Uterus (tissue), 4 donors: ENCODE measurements at regions of chr17 and their contacts with region 1.

Region 1: GRCh38 chr17:40443583-40444327 is 505 bp downstream of the IGFBP4 start:
- DNase-seq: peak; percentile 83
- H3K4me3 ChIP-seq: peak overlapping the region; percentile 56 to 87
- H3K27ac ChIP-seq: peak overlapping the region; percentile 94 to 97
- H3K4me1 ChIP-seq: peaks cover 3 to 15% of the 10 kb centered on the region in 2 donors
- H3K27me3 ChIP-seq: no peaks in the 10 kb centered on the region
- CTCF ChIP-seq: peak in 3 of 4 experiments; percentile 24 to 42 (median 29)
- POLR2A ChIP-seq: no peak

Region 2: GRCh38 chr17:40479533-40480480 is 36.1 kb after region 1 on chr17:
- intact Hi-C with region 1: loop called (anchors 5 kb)
- DNase-seq: no peak
- H3K4me3 ChIP-seq: no peak overlapping the region
- H3K27ac ChIP-seq: no peak overlapping the region
- H3K4me1 ChIP-seq: no peaks in the 10 kb centered on the region
- H3K27me3 ChIP-seq: no peaks in the 10 kb centered on the region
- CTCF ChIP-seq: no peak
- POLR2A ChIP-seq: no peak

Region 3: GRCh38 chr17:40510328-40510648 is 66.5 kb after region 1 on chr17:
- intact Hi-C with region 1: no loop called
- DNase-seq: peak; percentile 61 to 77
- H3K4me3 ChIP-seq: no peak overlapping the region
- H3K27ac ChIP-seq: peak overlapping the region; percentile 14 to 22
- H3K4me1 ChIP-seq: no peaks in the 10 kb centered on the region
- H3K27me3 ChIP-seq: no peaks in the 10 kb centered on the region
- CTCF ChIP-seq: no peak
- POLR2A ChIP-seq: no peak

Region 4: GRCh38 chr17:40531051-40531991 is 87.6 kb after region 1 on chr17:
- intact Hi-C with region 1: loop called (anchors 5 kb)
- DNase-seq: peak; percentile 19 to 27
- H3K4me3 ChIP-seq: no peak overlapping the region
- H3K27ac ChIP-seq: peak overlapping the region in 1 of 2 donors; percentile 93
- H3K4me1 ChIP-seq: peaks cover 0 to 11% of the 10 kb centered on the region in 2 donors
- H3K27me3 ChIP-seq: no peaks in the 10 kb centered on the region
- CTCF ChIP-seq: no peak
- POLR2A ChIP-seq: no peak

Region 5: DNA sequence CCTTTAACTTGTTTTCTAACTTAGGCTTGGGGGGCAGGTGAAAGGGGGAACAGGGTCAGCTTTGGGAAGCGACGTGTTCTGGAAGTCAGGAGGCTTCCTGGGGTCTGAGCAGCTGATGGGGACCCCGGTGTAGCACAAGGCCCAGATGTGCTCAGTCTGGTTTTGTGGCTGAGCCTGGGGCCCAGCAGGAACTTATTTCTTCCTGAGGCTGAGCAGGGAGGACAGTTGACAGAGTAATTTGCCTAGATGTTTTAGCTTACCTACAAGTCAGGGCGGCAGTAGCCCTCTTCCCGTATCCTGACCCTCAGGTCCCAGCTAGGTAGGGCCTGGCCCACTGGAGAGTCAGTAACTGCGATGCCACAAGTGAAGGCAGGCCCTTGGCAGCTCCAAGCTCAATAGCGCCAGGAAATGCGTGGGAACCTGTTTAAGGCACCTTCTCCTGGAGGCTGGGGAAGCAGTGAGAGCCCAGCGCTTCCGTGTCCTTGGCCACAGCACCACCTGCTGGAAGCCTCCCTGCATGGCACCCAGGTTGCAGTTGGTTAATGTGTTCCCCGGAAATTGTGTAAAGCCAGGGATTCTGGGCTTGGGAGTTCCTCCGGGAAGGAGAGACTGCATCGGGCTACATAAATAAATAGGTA is 116.3 kb after region 1 on chr17:
- intact Hi-C with region 1: loop called (anchors 2 kb)
- DNase-seq: peak; percentile 94 to 95
- H3K4me3 ChIP-seq: no peak overlapping the region
- H3K27ac ChIP-seq: peak overlapping the region; percentile 74 to 83
- H3K4me1 ChIP-seq: peaks cover 0 to 4% of the 10 kb centered on the region in 2 donors
- H3K27me3 ChIP-seq: no peaks in the 10 kb centered on the region
- CTCF ChIP-seq: peak; percentile 98 to 100 (median 99)
- POLR2A ChIP-seq: peak; percentile 34 to 37

Region 6: GRCh38 chr17:41060052-41060604 is 616.4 kb after region 1 on chr17 and contains the start of gene KRTAP2-3:
- intact Hi-C with region 1: no loop called
- DNase-seq: no peak
- H3K4me3 ChIP-seq: no peak within 1 kb of the TSS
- H3K27ac ChIP-seq: peak within 1 kb of the TSS in 1 of 2 donors; percentile 67
- H3K4me1 ChIP-seq: peaks cover 0 to 8% of the 10 kb centered on the region in 2 donors
- H3K27me3 ChIP-seq: no peaks in the 10 kb centered on the region
- CTCF ChIP-seq: no peak
- POLR2A ChIP-seq: no peak
- total RNA-seq, gene KRTAP2-3: not detected